ENCODE measurements at regions of chr5 and their contacts with region 1.

Region 1: DNA sequence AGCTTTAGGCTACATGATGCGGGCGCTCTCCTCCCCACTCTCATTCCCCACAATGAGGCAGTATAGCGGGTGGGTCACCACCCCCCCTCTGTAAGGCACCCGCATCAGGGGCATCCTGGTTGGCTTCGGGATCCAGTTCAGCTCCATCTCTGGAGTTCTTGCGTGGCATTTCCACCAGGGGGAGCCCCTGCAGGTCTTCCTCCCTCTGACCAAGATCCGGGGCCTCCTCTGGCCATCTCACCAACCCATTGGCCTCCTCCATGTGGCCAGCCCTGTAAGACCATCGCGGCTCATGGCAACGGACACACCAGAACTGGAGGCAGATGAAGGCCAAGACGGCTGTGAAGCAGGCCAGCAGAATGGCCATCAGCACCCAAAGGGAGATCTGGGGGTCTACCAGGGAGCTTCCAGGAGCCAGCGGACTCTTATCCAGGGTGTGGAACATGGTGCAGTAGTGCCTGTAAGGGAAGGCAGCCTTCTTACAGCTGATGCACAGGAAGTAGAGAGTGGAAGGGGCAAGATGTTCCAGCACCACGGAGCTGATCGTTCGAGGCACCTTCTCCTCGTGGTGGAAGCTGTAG is 77.0 kb downstream of the CYFIP2 start:
- DNase-seq: peak; percentile 53
- CTCF ChIP-seq: peak; percentile 59

Region 2: GRCh38 chr5:157312492-157312891 is 30.4 kb before region 1 on chr5:
- CTCF ChIA-PET with region 1: interaction called, 10 read pairs
- POLR2A ChIA-PET with region 1: no interaction called
- DNase-seq: peak; percentile 84
- CTCF ChIP-seq: peak; percentile 83

Region 3: GRCh38 chr5:157354800-157355199 is 11.9 kb after region 1 on chr5:
- CTCF ChIA-PET with region 1: interaction called, 32 read pairs
- POLR2A ChIA-PET with region 1: no interaction called
- DNase-seq: no peak
- CTCF ChIP-seq: peak; percentile 24

Region 4: DNA sequence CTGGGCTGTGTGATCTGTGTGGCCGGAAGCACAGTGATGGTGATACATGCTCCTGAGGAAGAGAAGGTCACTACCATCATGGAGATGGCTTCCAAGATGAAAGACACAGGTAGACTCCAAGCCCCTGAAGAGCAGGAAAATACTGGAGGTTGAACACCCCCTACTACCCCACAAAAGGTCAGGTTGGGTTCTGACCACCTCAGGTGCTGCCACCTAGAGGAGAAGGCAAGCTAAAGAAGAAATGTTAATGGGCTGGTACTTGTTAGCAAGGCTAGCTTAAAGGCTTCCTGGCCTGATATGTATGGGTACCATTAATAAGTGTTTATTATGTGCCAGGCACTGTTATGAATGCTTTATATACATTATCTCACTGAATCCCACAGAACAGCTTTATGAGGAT is 128.8 kb after region 1 on chr5:
- CTCF ChIA-PET with region 1: interaction called, 12 read pairs
- POLR2A ChIA-PET with region 1: no interaction called
- DNase-seq: peak; percentile 54
- CTCF ChIP-seq: peak; percentile 67

Region 5: DNA sequence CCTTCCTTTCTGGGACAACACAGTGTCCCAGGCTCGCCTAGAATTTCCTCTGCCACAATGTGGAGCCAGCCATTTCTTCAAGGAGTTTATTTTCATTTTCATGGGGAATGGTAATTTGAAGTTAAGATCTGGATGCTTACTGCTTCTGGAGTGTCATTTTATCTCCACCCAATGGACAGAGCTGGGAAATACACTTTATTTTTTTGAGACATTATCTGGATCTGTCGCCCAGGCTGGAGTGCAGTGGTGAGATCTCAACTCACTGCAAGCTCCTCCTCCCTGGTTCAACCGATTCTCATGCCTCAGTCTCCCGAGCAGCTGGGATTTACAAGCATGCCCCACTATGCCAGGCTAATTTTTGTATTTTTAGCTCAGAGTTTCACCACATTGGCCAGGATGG is 375.6 kb after region 1 on chr5:
- CTCF ChIA-PET with region 1: interaction called, 22 read pairs
- POLR2A ChIA-PET with region 1: no interaction called
- DNase-seq: peak; percentile 52
- CTCF ChIP-seq: peak; percentile 59